Heart left ventricle (tissue), 16 donors: ENCODE measurements at regions of chr4 and their contacts with region 1.

Region 1: GRCh38 chr4:142645475-142646108 is 200.5 kb downstream of the INPP4B start:
- DNase-seq: peak in 3 of 5 donors; percentile 17 to 19 (median 19)
- ATAC-seq: peak; percentile 89 to 96 (median 94)
- H3K4me3 ChIP-seq: no peak overlapping the region
- H3K27ac ChIP-seq: peak overlapping the region in 10 of 12 donors; percentile 1 to 88 (median 50)
- H3K4me1 ChIP-seq: peaks cover 0 to 21% (median 11%) of the 10 kb centered on the region in 12 donors
- H3K27me3 ChIP-seq: no peaks in the 10 kb centered on the region
- CTCF ChIP-seq: no peak
- POLR2A ChIP-seq: no peak

Region 2: DNA sequence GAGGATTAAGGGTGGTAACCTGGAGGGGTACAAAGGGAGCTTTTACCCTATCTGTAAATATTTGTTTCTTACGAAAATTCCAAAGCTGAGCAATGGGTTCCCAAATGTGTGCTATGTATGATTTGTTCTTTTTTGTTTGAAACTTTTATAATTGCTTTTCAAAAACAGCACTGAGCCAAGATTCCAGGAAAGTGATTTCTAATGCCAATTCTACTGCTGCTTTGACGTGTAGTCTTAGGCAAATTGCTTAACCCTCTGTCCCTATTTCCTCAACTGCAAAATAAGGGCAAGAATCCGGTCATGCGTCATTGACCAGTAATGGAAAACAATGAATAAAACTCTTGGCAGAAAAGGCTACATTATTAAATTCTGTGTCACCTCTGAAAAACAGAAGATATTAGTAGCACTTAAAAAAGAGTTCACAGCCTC is 554.5 kb before region 1 on chr4:
- intact Hi-C with region 1: no loop called
- DNase-seq: peak in 1 of 5 donors; percentile 12
- ATAC-seq: peak in 3 of 4 donors; percentile 43 to 69 (median 67)
- H3K4me3 ChIP-seq: no peak overlapping the region
- H3K27ac ChIP-seq: peak overlapping the region in 10 of 12 donors; percentile 1 to 84 (median 74)
- H3K4me1 ChIP-seq: peaks cover 0 to 17% (median 4%) of the 10 kb centered on the region in 12 donors
- H3K27me3 ChIP-seq: no peaks in the 10 kb centered on the region
- CTCF ChIP-seq: no peak
- POLR2A ChIP-seq: no peak

Region 3: DNA sequence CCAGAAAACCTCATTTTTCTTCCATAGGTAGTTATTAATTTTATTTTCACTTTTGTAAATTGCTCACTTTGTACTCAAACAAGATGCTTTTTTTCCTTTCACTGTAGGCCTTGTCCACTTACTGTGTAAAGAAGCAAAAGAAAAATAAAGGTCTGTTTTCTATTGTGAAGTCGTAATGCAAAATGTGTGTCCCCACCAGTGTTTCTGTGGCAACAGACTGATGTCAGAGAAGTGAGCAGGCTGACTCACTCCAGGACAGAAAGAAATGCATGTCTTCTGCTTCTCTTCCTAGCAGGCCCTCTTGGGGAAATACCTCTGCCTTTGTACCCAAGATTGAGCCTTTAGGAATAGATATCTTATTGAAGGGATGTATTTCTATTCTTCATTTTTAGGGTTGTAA is 170.2 kb after region 1 on chr4:
- intact Hi-C with region 1: no loop called
- DNase-seq: no peak
- ATAC-seq: peak in 3 of 4 donors; percentile 50 to 77 (median 58)
- H3K4me3 ChIP-seq: no peak overlapping the region
- H3K27ac ChIP-seq: peak overlapping the region in 4 of 12 donors; percentile 3 to 63 (median 28)
- H3K4me1 ChIP-seq: peaks cover 0 to 28% (median 14%) of the 10 kb centered on the region in 12 donors
- H3K27me3 ChIP-seq: no peaks in the 10 kb centered on the region
- CTCF ChIP-seq: no peak
- POLR2A ChIP-seq: no peak

Region 4: GRCh38 chr4:142826503-142827241 is 181.1 kb after region 1 on chr4:
- intact Hi-C with region 1: loop called in 1 of 10 experiments (anchors 5 kb)
- DNase-seq: no peak
- ATAC-seq: peak in 3 of 4 donors; percentile 27 to 70 (median 41)
- H3K4me3 ChIP-seq: no peak overlapping the region
- H3K27ac ChIP-seq: peak overlapping the region in 2 of 12 donors; percentile 33 to 40
- H3K4me1 ChIP-seq: peaks cover 0 to 20% (median 0%) of the 10 kb centered on the region in 12 donors
- H3K27me3 ChIP-seq: no peaks in the 10 kb centered on the region
- CTCF ChIP-seq: no peak
- POLR2A ChIP-seq: no peak

Region 5: DNA sequence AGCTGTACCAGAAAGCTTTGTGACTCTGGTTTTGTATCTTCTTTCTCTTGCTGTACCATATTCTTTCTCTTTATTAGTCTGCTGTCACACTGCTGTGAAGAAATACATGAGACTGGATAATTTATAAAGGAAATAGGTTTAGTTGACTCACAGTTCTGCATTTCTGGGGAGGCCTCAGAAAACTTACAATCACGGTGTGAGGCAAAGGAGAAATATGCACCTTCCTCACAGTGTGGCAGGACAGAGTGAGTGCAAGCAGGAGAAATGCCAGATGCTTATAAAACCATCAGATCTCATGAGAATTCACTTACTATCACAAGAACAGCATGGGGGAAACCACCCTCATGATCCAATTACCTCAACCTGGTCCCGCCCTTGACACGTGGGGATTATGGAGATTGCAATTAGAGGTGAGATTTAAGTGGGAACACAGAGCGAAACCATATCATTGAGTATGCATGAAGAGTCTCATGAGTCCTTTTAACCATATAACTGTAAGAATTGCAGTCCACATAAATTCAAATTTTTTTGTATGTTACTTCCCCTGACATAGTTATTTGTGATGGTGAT is 268.0 kb after region 1 on chr4:
- intact Hi-C with region 1: no loop called
- DNase-seq: no peak
- ATAC-seq: no peak
- H3K4me3 ChIP-seq: no peak overlapping the region
- H3K27ac ChIP-seq: peak overlapping the region in 1 of 12 donors; percentile 48
- H3K4me1 ChIP-seq: peaks cover 0 to 6% (median 0%) of the 10 kb centered on the region in 12 donors
- H3K27me3 ChIP-seq: no peaks in the 10 kb centered on the region
- CTCF ChIP-seq: no peak
- POLR2A ChIP-seq: no peak